KBM-7 (cell line): ENCODE measurements at regions of chr3 and their contacts with region 1.

Region 1: GRCh38 chr3:189947948-189948723 is 172.6 kb downstream of the P3H2 start:
- DNase-seq: peak; percentile 30

Region 2: DNA sequence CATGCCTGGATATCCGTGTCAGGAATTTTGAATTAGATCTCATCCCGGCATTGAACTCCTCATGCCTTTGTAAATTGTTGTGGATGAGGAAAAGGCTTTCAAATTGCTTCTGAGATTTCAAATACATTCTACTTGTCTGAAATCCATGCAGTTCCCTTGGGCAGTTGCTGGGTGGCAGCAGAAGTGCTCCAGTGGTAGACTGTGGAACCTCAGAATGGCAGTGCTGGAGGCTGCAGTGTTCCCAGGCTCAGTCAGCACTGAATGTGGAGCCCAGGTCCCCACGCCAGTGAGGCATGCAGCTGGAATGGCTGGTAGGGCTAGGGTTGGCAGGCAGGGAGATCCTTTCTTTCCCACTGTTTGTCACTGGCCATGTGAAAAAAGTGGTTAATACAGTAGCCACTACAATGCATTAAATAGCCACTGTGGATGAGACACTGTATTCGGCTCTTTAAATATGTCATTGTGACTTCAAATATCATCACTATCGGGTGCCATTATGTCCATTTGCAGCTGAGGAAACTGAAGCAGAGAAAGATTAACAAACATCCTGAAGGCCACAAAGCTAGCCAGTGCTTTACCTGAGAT is 677.8 kb before region 1 on chr3:
- in situ Hi-C with region 1: loop called (anchors 25 kb)
- DNase-seq: peak; percentile 21

Region 3: DNA sequence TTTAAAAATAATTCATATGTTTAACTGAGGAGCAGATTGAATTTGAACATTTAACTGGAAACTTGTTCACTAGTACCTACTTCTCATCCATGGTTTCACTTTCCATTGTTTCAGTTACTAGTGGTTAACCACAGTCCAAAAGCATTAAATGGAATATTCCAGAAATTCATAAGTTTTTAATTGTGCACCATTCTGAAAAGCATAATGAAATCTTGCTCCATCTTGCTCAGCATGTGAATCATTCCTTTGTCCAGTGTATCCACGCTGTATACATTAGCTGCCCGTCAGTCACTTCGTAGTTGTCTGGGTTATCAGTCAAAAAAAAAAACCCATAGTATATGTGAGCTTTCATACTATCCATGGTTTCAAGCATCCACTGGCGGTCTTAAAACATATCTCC is 558.8 kb before region 1 on chr3:
- in situ Hi-C with region 1: no loop called
- DNase-seq: no peak